Calu3 (cell line): ENCODE measurements at regions of chr1 and their contacts with region 1.

Region 1: GRCh38 chr1:160291248-160292220 is 6.6 kb upstream of the PEX19 start:
- DNase-seq: peak; percentile 75
- H3K4me3 Mint-ChIP-seq: no peak overlapping the region
- H3K27ac Mint-ChIP-seq: no peak overlapping the region
- H3K4me1 Mint-ChIP-seq: peaks cover 6% of the 10 kb centered on the region
- H3K27me3 Mint-ChIP-seq: no peaks in the 10 kb centered on the region
- CTCF ChIP-seq: peak; percentile 85

Region 2: GRCh38 chr1:160219062-160219929 is 72.2 kb before region 1 on chr1:
- CTCF ChIA-PET with region 1: no interaction called
- intact Hi-C with region 1: no loop called
- DNase-seq: peak; percentile 60
- H3K4me3 Mint-ChIP-seq: no peak overlapping the region
- H3K27ac Mint-ChIP-seq: no peak overlapping the region
- H3K4me1 Mint-ChIP-seq: no peaks in the 10 kb centered on the region
- H3K27me3 Mint-ChIP-seq: no peaks in the 10 kb centered on the region
- CTCF ChIP-seq: peak; percentile 36

Region 3: GRCh38 chr1:160251687-160252526 is 39.6 kb before region 1 on chr1:
- CTCF ChIA-PET with region 1: interaction called, 20 read pairs
- intact Hi-C with region 1: no loop called
- DNase-seq: peak; percentile 61
- H3K4me3 Mint-ChIP-seq: no peak overlapping the region
- H3K27ac Mint-ChIP-seq: no peak overlapping the region
- H3K4me1 Mint-ChIP-seq: peaks cover 7% of the 10 kb centered on the region
- H3K27me3 Mint-ChIP-seq: no peaks in the 10 kb centered on the region
- CTCF ChIP-seq: peak; percentile 70

Region 4: DNA sequence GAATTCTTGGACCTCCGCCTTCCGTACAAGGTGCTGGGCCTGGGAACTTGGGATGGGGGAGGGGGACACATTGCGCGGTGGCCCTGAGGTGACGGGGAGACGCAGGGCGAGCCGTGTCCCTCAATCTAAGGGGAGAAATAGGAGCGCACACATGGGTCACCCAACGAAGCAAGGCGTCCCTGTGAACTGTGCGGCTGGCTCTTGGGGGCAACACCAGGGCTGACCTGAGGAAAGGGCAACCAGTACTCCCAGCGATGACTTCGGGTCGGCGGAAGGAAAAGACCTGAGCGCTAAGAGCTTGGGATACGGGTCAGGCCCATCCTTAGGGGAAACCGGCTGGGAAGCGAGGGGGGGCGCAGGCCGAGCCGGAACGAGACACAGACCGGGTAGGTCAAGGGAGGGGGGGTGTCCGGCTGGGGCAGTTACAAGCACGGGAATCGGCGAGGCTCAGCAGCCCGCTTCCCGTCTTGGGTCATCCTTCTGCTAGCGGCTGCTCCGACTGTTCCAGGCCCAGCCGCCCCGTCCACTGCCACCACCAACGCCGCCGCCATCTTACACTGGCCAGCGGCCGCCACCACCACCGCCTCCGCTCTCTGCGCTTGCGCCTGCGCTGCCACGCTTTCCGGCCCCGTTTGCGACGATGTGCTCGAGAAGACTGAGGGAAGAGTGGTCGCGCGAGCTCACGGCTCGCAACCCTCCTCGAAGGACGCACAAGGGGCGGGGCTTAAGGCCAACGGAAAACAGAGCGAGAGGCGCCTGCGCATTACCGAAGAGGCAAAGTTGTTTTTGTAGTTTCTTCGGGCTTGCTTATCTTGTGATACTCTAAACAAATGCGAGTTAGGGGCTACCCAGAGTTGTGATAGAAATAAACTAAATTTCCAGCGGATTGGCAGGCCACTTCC is 29.4 kb before region 1 on chr1 and contains the start of gene DCAF8:
- CTCF ChIA-PET with region 1: interaction called, 11 read pairs
- intact Hi-C with region 1: no loop called
- DNase-seq: peak; percentile 98
- H3K4me3 Mint-ChIP-seq: peak within 1 kb of the TSS; percentile 93
- H3K27ac Mint-ChIP-seq: peak within 1 kb of the TSS; percentile 98
- H3K4me1 Mint-ChIP-seq: peaks cover 12% of the 10 kb centered on the region
- H3K27me3 Mint-ChIP-seq: peaks cover 5% of the 10 kb centered on the region
- CTCF ChIP-seq: no peak
- total RNA-seq, gene DCAF8: 119 and 126 TPM in 2 replicates

Region 5: GRCh38 chr1:160330129-160330528 is 38.6 kb after region 1 on chr1:
- CTCF ChIA-PET with region 1: no interaction called
- intact Hi-C with region 1: loop called (anchors 5 kb)
- DNase-seq: no peak
- H3K4me3 Mint-ChIP-seq: no peak overlapping the region
- H3K27ac Mint-ChIP-seq: no peak overlapping the region
- H3K4me1 Mint-ChIP-seq: no peaks in the 10 kb centered on the region
- H3K27me3 Mint-ChIP-seq: no peaks in the 10 kb centered on the region
- CTCF ChIP-seq: no peak

Region 6: DNA sequence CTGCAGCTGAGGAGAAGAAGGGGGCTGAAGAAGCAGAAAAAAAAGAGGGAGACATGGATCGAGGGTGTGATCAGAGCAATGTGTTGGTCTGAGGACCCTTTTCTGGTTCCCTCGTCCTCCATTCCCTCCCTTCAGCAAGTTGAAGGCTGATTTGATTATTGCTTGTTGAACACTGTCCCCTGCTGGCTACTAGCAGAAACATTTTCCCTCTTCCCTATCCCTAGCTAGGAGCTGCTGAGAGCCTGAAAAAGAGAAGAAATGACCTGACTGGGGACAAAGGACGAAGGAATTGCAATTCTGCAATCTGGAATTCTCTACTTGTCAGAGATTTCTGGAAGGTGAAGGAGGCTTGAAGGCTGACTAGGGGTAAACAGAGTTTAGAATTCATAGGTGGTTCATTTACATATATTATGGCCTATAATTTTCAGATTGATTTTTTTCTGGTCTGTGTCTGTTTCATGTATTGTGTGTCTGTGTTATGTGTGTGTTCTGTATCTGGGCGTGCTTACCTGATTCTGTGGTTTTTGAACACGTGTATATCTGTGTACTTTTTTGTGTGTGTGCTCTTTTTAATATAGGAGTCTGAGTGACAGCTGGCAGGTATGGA is 85.1 kb after region 1 on chr1:
- CTCF ChIA-PET with region 1: interaction called, 8 read pairs
- intact Hi-C with region 1: loop called (anchors 5 kb)
- DNase-seq: peak; percentile 55
- H3K4me3 Mint-ChIP-seq: no peak overlapping the region
- H3K27ac Mint-ChIP-seq: no peak overlapping the region
- H3K4me1 Mint-ChIP-seq: peaks cover 17% of the 10 kb centered on the region
- H3K27me3 Mint-ChIP-seq: peaks cover 24% of the 10 kb centered on the region
- CTCF ChIP-seq: peak; percentile 79

Region 7: GRCh38 chr1:160567858-160568682 is 276.5 kb after region 1 on chr1:
- CTCF ChIA-PET with region 1: no interaction called
- intact Hi-C with region 1: no loop called
- DNase-seq: no peak
- H3K4me3 Mint-ChIP-seq: no peak overlapping the region
- H3K27ac Mint-ChIP-seq: no peak overlapping the region
- H3K4me1 Mint-ChIP-seq: no peaks in the 10 kb centered on the region
- H3K27me3 Mint-ChIP-seq: peaks cover 53% of the 10 kb centered on the region
- CTCF ChIP-seq: no peak